AG04449 (cell line): ENCODE measurements at regions of chr12 and their contacts with region 1.

Region 1: GRCh38 chr12:56224102-56224701 is at the start of gene NABP2:
- DNase-seq: peak; percentile 75
- H3K4me3 ChIP-seq: peak within 1 kb of the TSS; percentile 78
- CTCF ChIP-seq: peak; percentile 96

Region 2: GRCh38 chr12:56117778-56118687 is 106.2 kb before region 1 on chr12 and contains the start of gene ZC3H10:
- CTCF ChIA-PET with region 1: interaction called, 40 read pairs
- POLR2A ChIA-PET with region 1: interaction called, 8 read pairs
- DNase-seq: peak; percentile 95
- H3K4me3 ChIP-seq: peak within 1 kb of the TSS; percentile 94
- CTCF ChIP-seq: peak; percentile 80

Region 3: DNA sequence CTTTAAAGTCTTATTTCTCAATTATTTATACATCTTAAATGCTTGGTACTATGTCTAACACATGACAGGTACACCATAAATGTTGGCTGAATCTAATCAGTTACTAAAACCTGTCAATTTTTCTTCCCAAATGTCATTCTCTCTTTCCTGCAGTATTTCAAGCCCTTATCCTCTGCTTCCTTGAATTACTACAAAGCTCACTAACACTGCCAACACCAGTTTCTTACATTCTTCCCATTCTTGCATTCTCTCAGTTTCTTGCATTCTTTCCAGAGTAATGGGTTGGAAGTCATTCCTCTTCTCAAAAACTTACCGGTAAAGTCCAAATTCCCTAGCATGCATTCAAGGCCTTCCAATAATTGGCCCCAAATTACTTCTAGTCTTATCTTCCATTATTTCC is 25.4 kb before region 1 on chr12:
- CTCF ChIA-PET with region 1: interaction called, 59 read pairs
- POLR2A ChIA-PET with region 1: interaction called, 49 read pairs
- DNase-seq: no peak
- H3K4me3 ChIP-seq: no peak overlapping the region
- CTCF ChIP-seq: no peak

Region 4: DNA sequence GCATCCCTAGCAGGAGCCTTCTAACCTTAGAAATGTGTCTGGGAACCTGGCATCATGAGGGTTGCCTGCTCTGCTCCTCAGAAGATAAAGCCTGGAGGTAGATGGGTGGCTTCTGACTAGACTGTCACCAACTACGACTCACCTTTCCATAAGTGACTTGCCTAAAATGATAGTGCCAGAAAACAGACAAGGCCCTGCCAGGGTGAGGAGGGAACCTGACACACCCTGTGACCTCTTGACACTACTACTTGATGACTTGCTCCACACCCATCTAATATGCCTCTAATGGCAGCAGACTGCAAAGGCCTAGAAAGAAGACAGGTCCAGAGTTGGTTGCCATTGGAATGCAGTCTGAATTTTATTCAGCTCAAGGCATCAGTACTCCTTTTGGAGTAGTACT is 11.8 kb before region 1 on chr12:
- CTCF ChIA-PET with region 1: interaction called, 59 read pairs
- POLR2A ChIA-PET with region 1: interaction called, 16 read pairs
- DNase-seq: no peak
- H3K4me3 ChIP-seq: no peak overlapping the region
- CTCF ChIP-seq: no peak

Region 5: DNA sequence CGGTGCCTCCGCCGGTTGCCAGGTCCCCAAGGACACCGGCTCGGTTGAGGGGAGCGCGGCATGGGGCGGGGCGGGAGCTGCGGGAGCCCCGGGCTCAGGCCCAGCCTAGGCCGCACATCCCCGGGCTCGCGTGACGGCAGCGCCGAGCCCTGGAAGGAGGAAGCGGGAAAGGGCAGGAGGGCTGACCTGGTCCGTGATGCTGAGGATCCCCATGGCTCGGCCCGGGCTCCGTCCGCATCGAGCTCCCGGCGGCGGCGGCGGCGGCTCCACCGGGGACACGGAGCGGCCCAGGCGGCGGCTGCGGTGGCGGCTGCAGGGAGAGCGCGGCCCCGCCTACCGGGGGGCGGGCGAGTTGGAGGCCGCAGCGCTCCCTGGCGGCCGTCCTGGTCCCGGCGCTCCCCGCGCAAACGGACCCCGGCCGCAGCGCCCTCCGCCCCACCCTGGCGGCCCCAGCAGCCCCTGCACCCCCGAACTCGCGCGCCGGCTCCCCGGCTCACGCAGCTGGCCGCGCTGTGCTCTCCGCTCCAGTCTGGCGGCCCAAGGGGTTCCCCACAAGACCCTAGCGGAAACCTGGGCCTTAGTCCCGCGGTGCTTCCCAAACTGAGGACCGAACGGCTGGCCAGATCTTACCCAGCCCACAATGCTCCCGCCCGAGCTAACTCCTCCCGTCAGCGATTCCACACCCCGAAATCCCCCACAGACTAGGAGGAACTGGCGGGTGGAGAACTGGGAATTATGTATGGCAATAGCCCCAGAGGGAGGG is 34.0 kb after region 1 on chr12 and contains the start of gene ANKRD52:
- CTCF ChIA-PET with region 1: interaction called, 36 read pairs
- POLR2A ChIA-PET with region 1: interaction called, 19 read pairs
- DNase-seq: no peak
- H3K4me3 ChIP-seq: peak within 1 kb of the TSS; percentile 80
- CTCF ChIP-seq: peak; percentile 72

Region 6: GRCh38 chr12:56468216-56469006 is 244.2 kb after region 1 on chr12 and contains the start of gene SPRYD4:
- CTCF ChIA-PET with region 1: interaction called, 10 read pairs
- POLR2A ChIA-PET with region 1: no interaction called
- DNase-seq: peak; percentile 36
- H3K4me3 ChIP-seq: peak within 1 kb of the TSS; percentile 84
- CTCF ChIP-seq: peak; percentile 50